ENCODE measurements at regions of chr2 and their contacts with region 1.

Region 1: DNA sequence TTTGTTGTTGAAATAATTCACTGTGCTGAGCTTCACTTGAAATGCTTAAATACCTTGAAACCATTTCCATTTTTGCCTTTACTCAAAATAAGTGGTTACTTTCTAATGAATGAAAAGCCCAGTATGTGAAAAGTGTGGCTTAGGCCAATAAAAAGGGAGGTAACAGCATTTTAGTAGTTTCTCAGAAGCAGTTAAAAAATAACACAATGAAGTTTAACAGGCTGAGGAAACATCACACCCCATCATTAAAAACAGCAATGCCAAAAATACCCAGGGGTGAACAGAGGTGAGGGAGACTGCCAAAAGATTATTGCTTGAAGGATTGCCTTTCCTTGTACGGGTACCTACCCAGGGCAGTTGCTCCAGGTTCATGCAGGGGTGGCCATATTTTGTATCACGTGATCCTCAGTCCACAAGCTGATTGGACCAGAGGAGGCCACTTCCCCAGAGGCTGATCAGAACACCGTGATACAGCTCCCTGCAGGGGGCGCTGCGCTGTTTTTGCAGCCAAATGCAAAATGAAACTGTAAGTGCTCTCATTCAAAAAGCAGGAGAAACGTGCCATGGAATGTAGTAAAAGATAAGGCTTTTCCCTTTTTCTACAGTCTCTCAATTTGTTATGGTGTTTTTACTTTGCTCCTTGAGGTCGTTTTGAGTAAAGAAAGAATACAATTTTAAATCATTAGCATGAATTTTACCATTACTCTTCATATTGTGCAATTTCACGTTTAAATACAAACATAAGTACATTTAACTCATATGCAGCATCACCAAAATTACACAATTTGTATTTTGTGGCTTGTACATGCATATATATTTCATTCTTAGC is 70.2 kb upstream of the SH3BP4 start:
- DNase-seq: peak; percentile 89
- ATAC-seq: peak; percentile 97 to 99

Region 2: GRCh38 chr2:235050992-235051351 is 169.3 kb after region 1 on chr2:
- intact Hi-C with region 1: loop called in 1 of 2 experiments (anchors 10 kb)
- DNase-seq: peak; percentile 95
- ATAC-seq: peak; percentile 89 to 93

Measured in left cardiac atrium (tissue), 4 donors.